ENCODE measurements at regions of chr19 and their contacts with region 1.

Region 1: GRCh38 chr19:6516659-6517291 is 14.1 kb upstream of the TNFSF9 start:
- DNase-seq: peak; percentile 95
- ATAC-seq: peak; percentile 81
- H3K4me3 Mint-ChIP-seq: peak overlapping the region; percentile 89
- H3K27ac Mint-ChIP-seq: peak overlapping the region; percentile 96
- H3K4me1 Mint-ChIP-seq: peaks cover 41% of the 10 kb centered on the region
- H3K27me3 Mint-ChIP-seq: no peaks in the 10 kb centered on the region

Region 2: GRCh38 chr19:6534451-6535100 is 17.8 kb after region 1 on chr19:
- CTCF ChIA-PET with region 1: interaction called, 10 read pairs
- DNase-seq: no peak
- ATAC-seq: no peak
- H3K4me3 Mint-ChIP-seq: no peak overlapping the region
- H3K27ac Mint-ChIP-seq: no peak overlapping the region
- H3K4me1 Mint-ChIP-seq: peaks cover 55% of the 10 kb centered on the region
- H3K27me3 Mint-ChIP-seq: peaks cover 28% of the 10 kb centered on the region

Region 3: DNA sequence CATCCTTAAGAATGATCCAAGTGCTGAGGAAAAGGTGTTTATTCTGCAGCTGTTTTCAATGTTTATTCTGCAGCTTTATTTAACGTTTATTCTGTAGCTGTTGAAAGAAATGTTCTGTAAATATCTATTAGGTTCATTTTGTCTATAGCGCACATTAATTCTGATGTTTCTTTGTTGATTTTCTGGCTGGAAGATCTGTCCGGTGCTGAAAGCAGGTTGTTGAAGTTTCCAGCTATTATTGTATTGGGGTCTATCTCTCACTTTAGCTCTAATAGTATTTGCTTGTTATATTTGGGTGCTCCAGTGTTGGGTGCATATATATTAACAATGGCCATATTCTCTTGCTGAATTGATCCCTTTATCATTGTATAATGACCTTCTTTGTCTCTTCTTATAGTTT is 54.0 kb after region 1 on chr19:
- CTCF ChIA-PET with region 1: no interaction called
- DNase-seq: no peak
- ATAC-seq: no peak
- H3K4me3 Mint-ChIP-seq: no peak overlapping the region
- H3K27ac Mint-ChIP-seq: no peak overlapping the region
- H3K4me1 Mint-ChIP-seq: no peaks in the 10 kb centered on the region
- H3K27me3 Mint-ChIP-seq: peaks cover 38% of the 10 kb centered on the region

Region 4: GRCh38 chr19:6632002-6632621 is 115.3 kb after region 1 on chr19:
- CTCF ChIA-PET with region 1: interaction called, 61 read pairs
- DNase-seq: peak; percentile 89
- ATAC-seq: peak; percentile 85
- H3K4me3 Mint-ChIP-seq: no peak overlapping the region
- H3K27ac Mint-ChIP-seq: peak overlapping the region; percentile 52
- H3K4me1 Mint-ChIP-seq: peaks cover 30% of the 10 kb centered on the region
- H3K27me3 Mint-ChIP-seq: no peaks in the 10 kb centered on the region

Region 5: GRCh38 chr19:6668691-6669090 is 151.9 kb after region 1 on chr19:
- CTCF ChIA-PET with region 1: interaction called, 13 read pairs
- DNase-seq: peak; percentile 58
- ATAC-seq: no peak
- H3K4me3 Mint-ChIP-seq: peak overlapping the region; percentile 99
- H3K27ac Mint-ChIP-seq: peak overlapping the region; percentile 90
- H3K4me1 Mint-ChIP-seq: peaks cover 44% of the 10 kb centered on the region
- H3K27me3 Mint-ChIP-seq: peaks cover 9% of the 10 kb centered on the region

Region 6: GRCh38 chr19:6868351-6868750 is 351.6 kb after region 1 on chr19:
- CTCF ChIA-PET with region 1: interaction called, 53 read pairs
- DNase-seq: no peak
- ATAC-seq: no peak
- H3K4me3 Mint-ChIP-seq: no peak overlapping the region
- H3K27ac Mint-ChIP-seq: no peak overlapping the region
- H3K4me1 Mint-ChIP-seq: peaks cover 3% of the 10 kb centered on the region
- H3K27me3 Mint-ChIP-seq: no peaks in the 10 kb centered on the region